Activated B cell treated with CpG ODN at 0.5 μM for 24 hours (primary cell): ENCODE measurements at regions of chr16 and their contacts with region 1.

Region 1: DNA sequence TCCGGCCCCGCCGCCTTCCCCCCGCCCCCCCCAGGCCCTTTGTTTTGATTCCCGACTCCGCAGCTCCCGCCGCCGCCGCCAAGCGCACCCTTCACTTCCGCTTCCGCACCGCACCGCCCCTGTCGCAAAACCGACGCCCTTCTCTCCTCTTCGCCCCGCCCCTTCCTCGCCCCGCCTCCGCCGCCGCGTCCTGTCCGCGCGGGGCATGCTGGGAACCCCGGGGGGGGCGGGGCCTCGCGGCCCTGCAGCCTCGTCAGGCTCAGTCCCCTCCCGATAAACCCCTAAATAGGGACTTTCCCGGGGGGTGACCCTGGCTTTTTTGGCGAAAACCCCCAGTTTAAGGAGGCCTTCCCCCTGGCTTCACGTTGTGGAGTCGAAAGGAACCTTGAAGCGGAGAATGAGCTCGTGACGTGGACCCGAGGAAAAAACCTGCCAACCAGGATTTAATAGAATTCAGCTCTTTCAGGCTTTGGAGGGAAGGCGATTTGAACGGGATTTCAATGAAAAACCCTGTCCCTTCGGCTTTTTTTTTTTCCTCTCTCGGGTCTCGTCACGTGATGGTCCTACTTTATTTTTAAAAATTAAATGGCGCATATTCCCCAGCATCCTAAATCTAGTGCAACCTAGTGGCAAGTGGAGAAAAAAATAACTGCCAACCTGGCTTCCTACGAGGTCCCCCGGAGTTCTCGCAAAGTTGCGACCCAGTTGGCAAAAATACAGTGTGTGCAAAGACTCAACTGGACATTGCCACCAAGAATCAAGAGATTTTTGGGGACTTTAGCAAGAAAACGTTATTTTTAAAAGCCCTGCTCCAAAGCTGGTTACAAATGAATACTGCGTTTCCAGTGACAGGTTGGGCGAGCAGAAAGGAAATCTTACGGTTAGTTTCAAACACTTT is at the start of gene MARF1:
- DNase-seq: peak; percentile 100
- ATAC-seq: peak; percentile 73
- H3K4me3 Mint-ChIP-seq: peak within 1 kb of the TSS; percentile 84
- H3K27ac Mint-ChIP-seq: peak within 1 kb of the TSS; percentile 98
- H3K4me1 Mint-ChIP-seq: peaks cover 75% of the 10 kb centered on the region
- H3K27me3 Mint-ChIP-seq: no peaks in the 10 kb centered on the region
- CTCF ChIP-seq: no peak
- total RNA-seq, gene MARF1: 160 and 186 TPM in 2 replicates

Region 2: DNA sequence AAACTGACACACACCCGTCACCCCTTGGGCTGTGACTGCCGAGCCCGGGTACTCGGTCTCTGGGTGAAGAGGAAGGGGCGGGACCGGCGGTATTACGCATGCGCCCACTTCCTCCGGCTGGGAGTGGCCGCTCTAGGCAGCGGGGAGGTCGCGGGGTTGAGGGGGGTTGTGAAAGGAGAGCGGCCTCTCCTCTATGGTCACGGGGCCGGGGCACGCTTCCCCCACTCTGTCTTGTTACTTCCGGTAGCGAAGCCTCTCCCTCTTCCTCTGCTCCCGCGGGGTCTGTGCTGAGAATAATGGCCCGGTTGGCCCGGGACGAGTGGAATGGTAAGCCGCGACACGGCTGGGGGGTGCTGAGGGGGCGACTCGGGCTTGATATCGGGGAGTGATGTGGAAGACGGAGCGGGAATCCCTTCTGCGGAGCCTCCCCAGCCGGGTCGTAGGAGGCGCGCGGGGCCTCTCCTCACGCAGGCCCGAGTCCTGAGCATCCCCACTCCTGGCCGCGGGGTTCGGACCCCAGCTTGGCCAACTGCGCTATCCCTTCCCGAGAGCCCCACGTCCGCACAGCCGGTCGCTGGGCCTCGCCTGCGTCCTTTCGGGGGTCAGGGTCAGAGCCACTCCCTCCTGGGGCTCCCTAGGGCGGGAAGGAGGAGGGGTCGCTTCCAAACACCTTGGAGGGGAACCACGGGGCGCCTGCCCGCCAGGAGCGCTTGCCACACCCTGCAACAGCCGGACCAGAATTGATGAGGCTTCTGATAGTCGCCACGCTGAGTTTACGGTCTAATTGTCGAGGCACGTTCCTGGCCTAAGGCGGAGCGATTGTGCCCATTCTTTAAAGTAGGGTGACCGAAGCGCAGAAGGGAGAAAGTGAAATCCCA is 1010.4 kb before region 1 on chr16 and contains the start of gene BFAR:
- CTCF ChIA-PET with region 1: no interaction called
- POLR2A ChIA-PET with region 1: interaction called, 3 read pairs
- intact Hi-C with region 1: loop called (anchors 5 kb)
- DNase-seq: peak; percentile 99
- ATAC-seq: peak; percentile 77
- H3K4me3 Mint-ChIP-seq: peak within 1 kb of the TSS; percentile 100
- H3K27ac Mint-ChIP-seq: peak within 1 kb of the TSS; percentile 97
- H3K4me1 Mint-ChIP-seq: peaks cover 64% of the 10 kb centered on the region
- H3K27me3 Mint-ChIP-seq: no peaks in the 10 kb centered on the region
- CTCF ChIP-seq: no peak
- total RNA-seq, gene BFAR: 54.9 and 68.2 TPM in 2 replicates

Region 3: GRCh38 chr16:15592324-15592723 is 51.0 kb before region 1 on chr16:
- CTCF ChIA-PET with region 1: interaction called, 11 read pairs
- POLR2A ChIA-PET with region 1: interaction called, 142 read pairs
- intact Hi-C with region 1: loop called (anchors 1 kb)
- DNase-seq: peak; percentile 21
- ATAC-seq: no peak
- H3K4me3 Mint-ChIP-seq: no peak overlapping the region
- H3K27ac Mint-ChIP-seq: peak overlapping the region; percentile 84
- H3K4me1 Mint-ChIP-seq: peaks cover 65% of the 10 kb centered on the region
- H3K27me3 Mint-ChIP-seq: no peaks in the 10 kb centered on the region
- CTCF ChIP-seq: no peak

Region 4: GRCh38 chr16:15607700-15608396 is 35.4 kb before region 1 on chr16:
- CTCF ChIA-PET with region 1: no interaction called
- POLR2A ChIA-PET with region 1: no interaction called
- intact Hi-C with region 1: no loop called
- DNase-seq: no peak
- ATAC-seq: no peak
- H3K4me3 Mint-ChIP-seq: no peak overlapping the region
- H3K27ac Mint-ChIP-seq: peak overlapping the region; percentile 41
- H3K4me1 Mint-ChIP-seq: no peaks in the 10 kb centered on the region
- H3K27me3 Mint-ChIP-seq: no peaks in the 10 kb centered on the region
- CTCF ChIP-seq: no peak

Region 5: GRCh38 chr16:15658149-15658548 is 14.9 kb after region 1 on chr16:
- CTCF ChIA-PET with region 1: no interaction called
- POLR2A ChIA-PET with region 1: interaction called, 58 read pairs
- intact Hi-C with region 1: loop called (anchors 1 kb)
- DNase-seq: no peak
- ATAC-seq: peak; percentile 43
- H3K4me3 Mint-ChIP-seq: no peak overlapping the region
- H3K27ac Mint-ChIP-seq: peak overlapping the region; percentile 81
- H3K4me1 Mint-ChIP-seq: peaks cover 69% of the 10 kb centered on the region
- H3K27me3 Mint-ChIP-seq: no peaks in the 10 kb centered on the region
- CTCF ChIP-seq: no peak

Region 6: GRCh38 chr16:15682105-15682570 is 38.8 kb after region 1 on chr16:
- CTCF ChIA-PET with region 1: no interaction called
- POLR2A ChIA-PET with region 1: interaction called, 16 read pairs
- intact Hi-C with region 1: no loop called
- DNase-seq: no peak
- ATAC-seq: peak; percentile 87
- H3K4me3 Mint-ChIP-seq: no peak overlapping the region
- H3K27ac Mint-ChIP-seq: peak overlapping the region; percentile 42
- H3K4me1 Mint-ChIP-seq: peaks cover 8% of the 10 kb centered on the region
- H3K27me3 Mint-ChIP-seq: no peaks in the 10 kb centered on the region
- CTCF ChIP-seq: no peak

Region 7: GRCh38 chr16:15732416-15732815 is 89.1 kb after region 1 on chr16:
- CTCF ChIA-PET with region 1: no interaction called
- POLR2A ChIA-PET with region 1: no interaction called
- intact Hi-C with region 1: no loop called
- DNase-seq: no peak
- ATAC-seq: no peak
- H3K4me3 Mint-ChIP-seq: no peak overlapping the region
- H3K27ac Mint-ChIP-seq: no peak overlapping the region
- H3K4me1 Mint-ChIP-seq: no peaks in the 10 kb centered on the region
- H3K27me3 Mint-ChIP-seq: no peaks in the 10 kb centered on the region
- CTCF ChIP-seq: no peak

Region 8: GRCh38 chr16:16048904-16049582 is 405.7 kb after region 1 on chr16:
- CTCF ChIA-PET with region 1: no interaction called
- POLR2A ChIA-PET with region 1: no interaction called
- intact Hi-C with region 1: no loop called
- DNase-seq: no peak
- ATAC-seq: no peak
- H3K4me3 Mint-ChIP-seq: no peak overlapping the region
- H3K27ac Mint-ChIP-seq: no peak overlapping the region
- H3K4me1 Mint-ChIP-seq: peaks cover 15% of the 10 kb centered on the region
- H3K27me3 Mint-ChIP-seq: no peaks in the 10 kb centered on the region
- CTCF ChIP-seq: no peak